ENCODE measurements at regions of chr9 and their contacts with region 1.

Region 1: GRCh38 chr9:121545875-121546423 is 46.3 kb upstream of the GGTA1 start:
- DNase-seq: peak; percentile 91
- H3K4me3 ChIP-seq: no peak overlapping the region
- H3K27ac ChIP-seq: no peak overlapping the region
- H3K4me1 ChIP-seq: no peaks in the 10 kb centered on the region
- H3K27me3 ChIP-seq: peaks cover 0 to under 1% of the 10 kb centered on the region in 2 experiments
- CTCF ChIP-seq: peak; percentile 98 to 99
- POLR2A ChIP-seq: no peak

Region 2: GRCh38 chr9:120985810-120986222 is 560.1 kb before region 1 on chr9:
- CTCF ChIA-PET with region 1: no interaction called
- POLR2A ChIA-PET with region 1: no interaction called
- dilution Hi-C with region 1: no loop called
- intact Hi-C with region 1: no loop called
- DNase-seq: peak; percentile 84
- H3K4me3 ChIP-seq: no peak overlapping the region
- H3K27ac ChIP-seq: no peak overlapping the region
- H3K4me1 ChIP-seq: peaks cover 17% of the 10 kb centered on the region
- H3K27me3 ChIP-seq: no peaks in the 10 kb centered on the region
- CTCF ChIP-seq: peak; percentile 54
- POLR2A ChIP-seq: no peak

Region 3: GRCh38 chr9:121405899-121406298 is 140.1 kb before region 1 on chr9:
- CTCF ChIA-PET with region 1: no interaction called
- POLR2A ChIA-PET with region 1: no interaction called
- dilution Hi-C with region 1: no loop called
- intact Hi-C with region 1: no loop called
- DNase-seq: no peak
- H3K4me3 ChIP-seq: no peak overlapping the region
- H3K27ac ChIP-seq: no peak overlapping the region
- H3K4me1 ChIP-seq: no peaks in the 10 kb centered on the region
- H3K27me3 ChIP-seq: peaks cover 0 to 7% of the 10 kb centered on the region in 2 experiments
- CTCF ChIP-seq: no peak
- POLR2A ChIP-seq: no peak

Region 4: GRCh38 chr9:121439711-121440664 is 106.0 kb before region 1 on chr9:
- CTCF ChIA-PET with region 1: no interaction called
- POLR2A ChIA-PET with region 1: no interaction called
- dilution Hi-C with region 1: no loop called
- intact Hi-C with region 1: no loop called
- DNase-seq: peak; percentile 33
- H3K4me3 ChIP-seq: no peak overlapping the region
- H3K27ac ChIP-seq: no peak overlapping the region
- H3K4me1 ChIP-seq: no peaks in the 10 kb centered on the region
- H3K27me3 ChIP-seq: peaks cover 23 to 37% of the 10 kb centered on the region in 2 experiments
- CTCF ChIP-seq: peak in 1 of 2 donors; percentile 20
- POLR2A ChIP-seq: no peak

Region 5: GRCh38 chr9:121557581-121558447 is 11.9 kb after region 1 on chr9:
- CTCF ChIA-PET with region 1: interaction called, 24 read pairs
- POLR2A ChIA-PET with region 1: no interaction called
- dilution Hi-C with region 1: no loop called
- intact Hi-C with region 1: no loop called
- DNase-seq: peak; percentile 83
- H3K4me3 ChIP-seq: no peak overlapping the region
- H3K27ac ChIP-seq: peak overlapping the region; percentile 83
- H3K4me1 ChIP-seq: peaks cover 20% of the 10 kb centered on the region
- H3K27me3 ChIP-seq: no peaks in the 10 kb centered on the region
- CTCF ChIP-seq: no peak
- POLR2A ChIP-seq: no peak

Region 6: DNA sequence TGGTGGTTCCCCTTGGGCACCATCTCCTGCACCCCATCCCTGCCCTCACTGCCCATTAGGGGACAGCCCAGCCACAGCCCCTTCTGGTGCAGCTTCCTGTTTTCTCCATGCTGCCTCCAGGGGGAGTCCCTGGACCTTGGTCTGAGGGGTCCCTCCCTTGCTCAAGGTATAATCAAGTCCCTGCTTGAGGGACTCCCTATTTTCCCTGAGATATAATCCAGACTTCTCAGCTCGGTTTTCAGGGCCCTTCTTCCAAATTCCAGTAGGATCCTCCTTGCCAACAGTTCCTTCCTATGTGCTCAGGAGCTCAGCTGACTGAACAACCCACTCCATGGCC is 75.1 kb after region 1 on chr9:
- CTCF ChIA-PET with region 1: interaction called, 17 read pairs
- POLR2A ChIA-PET with region 1: no interaction called
- dilution Hi-C with region 1: no loop called
- intact Hi-C with region 1: loop called (anchors 2 kb)
- DNase-seq: peak; percentile 35
- H3K4me3 ChIP-seq: no peak overlapping the region
- H3K27ac ChIP-seq: no peak overlapping the region
- H3K4me1 ChIP-seq: no peaks in the 10 kb centered on the region
- H3K27me3 ChIP-seq: no peaks in the 10 kb centered on the region
- CTCF ChIP-seq: peak; percentile 38 to 61
- POLR2A ChIP-seq: no peak

Region 7: GRCh38 chr9:121692606-121693387 is 146.8 kb after region 1 on chr9:
- CTCF ChIA-PET with region 1: interaction called, 63 read pairs
- POLR2A ChIA-PET with region 1: no interaction called
- dilution Hi-C with region 1: no loop called
- intact Hi-C with region 1: loop called (anchors 1 kb)
- DNase-seq: no peak
- H3K4me3 ChIP-seq: no peak overlapping the region
- H3K27ac ChIP-seq: no peak overlapping the region
- H3K4me1 ChIP-seq: no peaks in the 10 kb centered on the region
- H3K27me3 ChIP-seq: no peaks in the 10 kb centered on the region
- CTCF ChIP-seq: no peak
- POLR2A ChIP-seq: no peak

Region 8: GRCh38 chr9:121902461-121903135 is 356.6 kb after region 1 on chr9:
- CTCF ChIA-PET with region 1: interaction called, 3 read pairs
- POLR2A ChIA-PET with region 1: no interaction called
- dilution Hi-C with region 1: no loop called
- intact Hi-C with region 1: loop called (anchors 10 kb)
- DNase-seq: peak; percentile 95
- H3K4me3 ChIP-seq: no peak overlapping the region
- H3K27ac ChIP-seq: peak overlapping the region; percentile 76
- H3K4me1 ChIP-seq: peaks cover 13% of the 10 kb centered on the region
- H3K27me3 ChIP-seq: no peaks in the 10 kb centered on the region
- CTCF ChIP-seq: no peak
- POLR2A ChIP-seq: no peak

Region 9: GRCh38 chr9:122099271-122099869 is 553.4 kb after region 1 on chr9:
- CTCF ChIA-PET with region 1: interaction called, 16 read pairs
- POLR2A ChIA-PET with region 1: no interaction called
- dilution Hi-C with region 1: no loop called
- intact Hi-C with region 1: no loop called
- DNase-seq: peak; percentile 60
- H3K4me3 ChIP-seq: no peak overlapping the region
- H3K27ac ChIP-seq: no peak overlapping the region
- H3K4me1 ChIP-seq: no peaks in the 10 kb centered on the region
- H3K27me3 ChIP-seq: peaks cover 0 to 2% of the 10 kb centered on the region in 2 experiments
- CTCF ChIP-seq: peak; percentile 77 to 85
- POLR2A ChIP-seq: no peak